Naive thymus-derived CD4-positive, alpha-beta T cell (primary cell): ENCODE measurements at regions of chr12 and their contacts with region 1.

Region 1: GRCh38 chr12:84911331-84912197 is 1.0 kb downstream of the SLC6A15 start:
- DNase-seq: no peak
- ATAC-seq: no peak
- H3K4me3 ChIP-seq: no peak overlapping the region
- H3K4me3 Mint-ChIP-seq: peak overlapping the region; percentile 5 to 66 (median 44)
- H3K27ac ChIP-seq: no peak overlapping the region
- H3K27ac Mint-ChIP-seq: no peak overlapping the region
- H3K4me1 ChIP-seq: no peaks in the 10 kb centered on the region
- H3K4me1 Mint-ChIP-seq: peaks cover 0 to 19% (median 13%) of the 10 kb centered on the region in 7 donors
- H3K27me3 ChIP-seq: peaks cover 0 to 4% of the 10 kb centered on the region in 2 donors
- H3K27me3 Mint-ChIP-seq: peaks cover 31 to 57% (median 48%) of the 10 kb centered on the region in 5 donors

Region 2: DNA sequence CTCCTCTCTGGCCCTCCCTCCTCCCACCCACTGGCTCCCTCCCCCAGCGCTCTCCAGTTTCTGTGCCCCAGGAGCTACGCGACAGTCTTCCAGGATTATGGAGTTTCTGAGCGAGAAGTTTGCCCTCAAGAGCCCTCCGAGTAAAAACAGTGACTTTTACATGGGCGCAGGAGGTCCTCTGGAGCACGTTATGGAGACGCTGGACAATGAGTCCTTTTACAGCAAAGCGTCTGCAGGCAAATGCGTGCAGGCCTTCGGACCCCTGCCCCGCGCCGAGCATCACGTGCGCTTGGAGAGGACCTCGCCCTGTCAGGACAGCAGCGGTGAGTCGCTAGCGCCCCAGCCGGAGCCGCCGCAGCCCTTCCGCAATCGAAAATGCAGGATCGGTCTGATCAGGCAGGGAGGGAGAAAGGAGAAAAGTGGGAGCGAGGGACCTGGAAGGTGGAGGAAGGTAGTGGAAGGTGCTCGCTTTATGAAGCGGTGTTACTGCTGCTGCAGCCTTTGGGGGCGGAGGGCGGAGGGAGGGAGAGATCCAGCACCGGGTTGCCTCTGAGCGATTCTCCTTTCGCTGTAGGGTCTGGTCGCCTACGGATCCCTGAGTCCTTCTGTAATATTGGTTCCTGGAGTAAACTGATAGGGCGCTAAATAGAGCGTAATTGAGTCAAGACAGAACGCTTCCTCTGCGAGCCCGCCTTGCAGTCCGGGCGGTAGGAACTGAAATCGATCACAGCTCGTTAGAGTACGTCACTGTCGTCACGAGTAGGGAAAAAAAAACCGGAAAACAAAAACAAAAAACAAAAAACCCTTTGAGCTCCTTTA is 368.8 kb after region 1 on chr12 and contains the start of gene ALX1:
- CTCF ChIA-PET with region 1: no interaction called
- POLR2A ChIA-PET with region 1: no interaction called
- intact Hi-C with region 1: loop called in 1 of 2 experiments (anchors 2 kb)
- DNase-seq: peak in 1 of 9 donors; percentile 23
- ATAC-seq: no peak
- H3K4me3 ChIP-seq: no peak within 1 kb of the TSS
- H3K4me3 Mint-ChIP-seq: peak within 1 kb of the TSS in 8 of 10 donors; percentile 15 to 80 (median 42)
- H3K27ac ChIP-seq: no peak within 1 kb of the TSS
- H3K27ac Mint-ChIP-seq: peak within 1 kb of the TSS in 1 of 9 donors; percentile 73
- H3K4me1 ChIP-seq: no peaks in the 10 kb centered on the region
- H3K4me1 Mint-ChIP-seq: peaks cover 0 to 7% (median 4%) of the 10 kb centered on the region in 7 donors
- H3K27me3 ChIP-seq: no peaks in the 10 kb centered on the region
- H3K27me3 Mint-ChIP-seq: peaks cover 52 to 68% (median 56%) of the 10 kb centered on the region in 5 donors
- total RNA-seq, gene ALX1: not detected